ENCODE measurements at regions of chr2 and their contacts with region 1.

Region 1: DNA sequence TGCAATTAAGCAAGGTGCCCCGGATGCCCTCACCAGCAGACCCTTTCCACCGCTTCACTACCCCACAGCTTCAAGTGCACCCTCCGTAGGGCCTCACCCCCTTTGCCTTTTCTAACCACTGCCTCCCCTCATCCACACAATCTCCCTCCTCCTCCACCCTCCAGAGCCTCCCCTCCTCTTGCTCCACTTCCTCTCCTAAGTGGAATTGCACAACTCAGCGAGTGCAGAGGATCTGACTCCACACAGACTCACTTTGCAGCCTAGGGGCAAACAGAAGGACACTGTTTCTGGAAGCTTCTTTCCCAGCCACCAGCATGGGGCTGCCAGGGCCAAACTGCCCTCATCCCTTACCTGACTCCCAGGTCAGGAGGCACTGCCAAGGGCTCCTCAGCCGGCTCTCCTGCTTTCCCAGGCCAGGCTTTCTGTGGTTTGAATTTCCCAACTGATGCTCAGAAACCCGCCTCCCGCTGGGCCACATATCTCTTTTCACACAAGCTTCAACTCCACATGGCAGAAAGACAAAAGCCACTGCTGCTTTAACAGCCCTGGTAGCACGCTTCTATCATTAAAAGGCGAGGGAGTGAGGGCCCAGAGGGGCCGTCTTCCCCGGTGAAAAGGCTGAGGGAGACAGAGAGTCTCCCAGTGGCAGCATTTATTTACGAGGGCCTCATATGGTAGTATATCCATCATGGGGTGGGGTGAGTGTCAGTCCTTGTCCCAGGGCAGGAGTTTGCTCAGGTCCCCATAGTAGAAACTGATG is 74.7 kb upstream of the MGAT4A start:
- DNase-seq: no peak
- H3K4me3 ChIP-seq: no peak overlapping the region
- H3K27ac ChIP-seq: peak overlapping the region in 3 of 4 donors; percentile 5 to 19 (median 11)
- H3K4me1 ChIP-seq: peaks cover 0 to 15% (median 4%) of the 10 kb centered on the region in 4 donors
- H3K27me3 ChIP-seq: no peaks in the 10 kb centered on the region
- CTCF ChIP-seq: no peak
- EP300 ChIP-seq: no peak
- POLR2A ChIP-seq: no peak

Region 2: GRCh38 chr2:98731041-98731893 is 74.3 kb before region 1 on chr2 and contains the start of gene MGAT4A:
- in situ Hi-C with region 1: no loop called
- intact Hi-C with region 1: loop called (anchors 5 kb)
- DNase-seq: peak; percentile 88
- H3K4me3 ChIP-seq: peak within 1 kb of the TSS; percentile 87 to 98 (median 97)
- H3K27ac ChIP-seq: peak within 1 kb of the TSS; percentile 93 to 99 (median 98)
- H3K4me1 ChIP-seq: peaks cover 17 to 59% (median 47%) of the 10 kb centered on the region in 4 donors
- H3K27me3 ChIP-seq: no peaks in the 10 kb centered on the region
- CTCF ChIP-seq: no peak
- EP300 ChIP-seq: no peak
- POLR2A ChIP-seq: peak; percentile 75
- total RNA-seq, gene MGAT4A: 29.9 to 237 (median 124) TPM